Activated CD4-positive, alpha-beta memory T cell treated with anti-CD3 and anti-CD28 coated beads for 36 hours (primary cell): ENCODE measurements at regions of chr9 and their contacts with region 1.

Region 1: GRCh38 chr9:9605681-9606080 is 1007.1 kb downstream of the PTPRD start:
- DNase-seq: no peak
- H3K4me3 Mint-ChIP-seq: no peak overlapping the region
- H3K27ac Mint-ChIP-seq: no peak overlapping the region
- H3K4me1 Mint-ChIP-seq: no peaks in the 10 kb centered on the region
- H3K27me3 Mint-ChIP-seq: no peaks in the 10 kb centered on the region

Region 2: DNA sequence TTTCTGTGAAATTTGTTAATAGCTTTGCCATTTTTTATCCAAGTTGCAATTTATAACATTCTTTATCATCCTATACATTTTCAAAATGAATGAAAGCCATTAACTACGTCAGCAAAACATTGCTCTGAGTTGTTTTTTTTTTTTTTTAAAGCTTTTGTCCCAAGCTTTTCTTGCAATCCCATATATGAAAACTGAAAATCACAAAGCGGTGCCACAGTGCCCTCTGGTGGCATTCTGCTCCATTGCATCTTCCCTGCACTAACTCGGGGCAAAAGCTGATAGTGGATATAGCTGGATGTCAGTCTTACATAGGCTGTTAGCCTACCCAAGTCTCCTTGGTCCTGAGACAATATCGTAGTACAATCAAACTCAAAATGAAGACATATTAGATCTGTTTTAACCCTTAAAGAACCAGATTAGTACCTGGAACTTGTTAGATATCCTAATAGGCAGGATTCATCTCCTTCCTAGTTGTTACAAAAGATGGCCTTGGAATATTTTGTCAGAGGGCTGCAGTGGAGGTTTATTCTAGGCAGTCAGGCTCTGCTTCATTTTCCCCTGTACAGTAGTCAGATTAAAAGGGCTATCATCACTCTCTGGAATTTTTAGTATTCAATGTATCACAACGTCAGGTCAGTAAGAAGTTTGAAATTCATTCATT is 337.2 kb after region 1 on chr9:
- CTCF ChIA-PET with region 1: interaction called, 4 read pairs
- POLR2A ChIA-PET with region 1: no interaction called
- intact Hi-C with region 1: loop called (anchors 5 kb)
- DNase-seq: peak; percentile 70
- H3K4me3 Mint-ChIP-seq: no peak overlapping the region
- H3K27ac Mint-ChIP-seq: no peak overlapping the region
- H3K4me1 Mint-ChIP-seq: no peaks in the 10 kb centered on the region
- H3K27me3 Mint-ChIP-seq: no peaks in the 10 kb centered on the region